ENCODE measurements at regions of chr11 and their contacts with region 1.

Region 1: DNA sequence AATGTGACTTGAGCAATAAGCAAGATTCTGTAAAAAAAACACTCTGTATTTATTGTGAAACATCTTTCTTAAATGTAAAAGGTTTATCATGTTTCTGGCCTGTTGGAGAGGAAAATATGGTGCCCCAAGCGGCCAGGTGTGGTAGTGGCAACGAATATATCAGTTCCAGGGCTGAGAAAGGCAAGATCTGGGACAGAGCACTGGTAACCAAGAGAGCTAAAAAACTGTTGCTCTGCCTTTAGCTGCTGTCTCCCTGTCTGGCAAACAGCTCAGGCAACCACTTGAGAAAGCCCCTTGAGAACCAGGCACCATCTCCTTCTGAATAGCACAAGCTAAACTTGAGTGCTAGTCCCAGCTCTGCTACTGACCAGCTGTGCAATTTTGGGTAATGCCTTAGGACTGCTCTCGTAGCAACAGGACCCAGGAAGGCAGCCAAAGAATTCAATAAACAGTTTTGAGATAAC is 129.9 kb downstream of the KCNC1 start:
- DNase-seq: peak in 1 of 2 experiments; percentile 69
- H3K4me3 ChIP-seq: no peak overlapping the region
- H3K27ac ChIP-seq: no peak overlapping the region
- H3K4me1 ChIP-seq: peaks cover 2 to 8% (median 5%) of the 10 kb centered on the region in 4 experiments; a peak in 5 of 7 replicates
- H3K27me3 ChIP-seq: no peaks in the 10 kb centered on the region
- CTCF ChIP-seq: peak; percentile 53 to 70 (median 60)
- EP300 ChIP-seq: no peak
- POLR2A ChIP-seq: no peak
- RAD21 ChIP-seq: peak; percentile 19 to 37; a peak in 3 of 4 replicates

Region 2: DNA sequence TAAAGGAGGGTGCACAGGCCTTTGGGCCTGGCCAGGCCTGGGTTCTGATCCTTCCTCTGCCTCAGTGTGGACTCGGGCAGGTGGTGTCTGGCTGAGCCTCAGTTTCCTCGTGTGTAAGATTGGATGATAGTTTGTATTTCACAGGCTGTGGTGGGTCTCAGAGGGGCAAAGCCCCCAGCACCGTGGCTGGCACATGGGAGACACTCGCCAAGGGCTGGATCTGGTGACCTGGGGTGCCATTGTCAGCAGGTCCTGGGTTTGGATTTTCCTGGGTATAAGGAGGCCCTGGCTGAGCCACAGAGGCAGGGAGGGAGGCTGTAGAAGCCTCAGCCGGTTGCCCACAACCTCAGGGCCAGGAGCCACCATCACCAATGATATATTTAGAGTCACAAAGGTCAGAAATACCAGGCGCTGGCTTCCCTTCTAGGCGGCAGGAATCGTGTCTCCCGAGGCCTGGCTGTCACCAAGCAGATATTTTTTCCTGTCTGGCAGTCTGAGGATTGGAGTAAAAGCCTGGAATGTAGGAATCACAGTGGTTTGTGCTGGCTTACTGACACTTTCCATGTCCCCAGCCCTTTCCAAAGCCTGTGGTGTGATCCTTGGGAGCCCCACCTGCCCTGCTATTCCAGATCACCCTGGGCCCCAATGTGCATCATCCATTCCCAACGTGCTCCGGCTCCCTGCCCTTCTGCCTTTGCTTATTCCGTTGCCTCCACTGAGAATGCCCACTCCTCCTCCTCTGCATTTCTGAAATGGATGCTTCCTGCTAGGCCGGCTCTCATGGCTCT is 114.3 kb before region 1 on chr11:
- CTCF ChIA-PET with region 1: interaction called, 14 read pairs
- POLR2A ChIA-PET with region 1: no interaction called
- DNase-seq: no peak
- H3K4me3 ChIP-seq: no peak overlapping the region
- H3K27ac ChIP-seq: no peak overlapping the region
- H3K4me1 ChIP-seq: no peaks in the 10 kb centered on the region
- H3K27me3 ChIP-seq: no peaks in the 10 kb centered on the region
- CTCF ChIP-seq: no peak
- EP300 ChIP-seq: no peak
- POLR2A ChIP-seq: no peak
- RAD21 ChIP-seq: no peak

Region 3: DNA sequence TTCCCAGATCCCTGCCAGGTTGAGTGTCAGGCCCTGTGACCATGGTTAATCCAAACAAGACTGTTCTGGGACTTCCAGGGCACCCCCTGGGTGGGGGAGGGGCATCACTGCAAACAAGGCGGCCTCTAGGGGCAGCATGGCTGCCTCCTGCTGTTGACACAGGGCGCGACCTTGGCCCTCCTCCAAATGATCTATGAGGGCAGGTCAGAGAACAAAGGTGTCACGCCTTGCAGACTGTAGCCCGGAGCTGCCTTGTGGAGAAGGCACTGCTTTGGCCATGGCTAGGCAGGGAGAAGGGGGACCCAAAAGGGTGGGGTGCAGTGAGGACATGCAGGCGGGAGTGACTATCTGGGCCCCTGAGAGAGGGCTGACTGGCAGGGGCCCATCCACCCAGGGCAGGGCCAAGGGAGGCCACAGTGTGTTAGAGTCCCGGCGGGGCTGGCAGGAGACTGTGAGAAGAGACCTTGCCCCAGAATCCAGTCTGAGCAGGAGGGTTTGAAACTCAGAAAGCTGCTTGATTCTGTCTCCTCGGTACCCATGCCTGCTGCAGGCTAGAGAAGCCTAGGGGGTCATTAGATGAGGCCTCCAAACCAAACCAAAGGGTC is 94.4 kb before region 1 on chr11:
- CTCF ChIA-PET with region 1: interaction called, 11 read pairs
- POLR2A ChIA-PET with region 1: no interaction called
- DNase-seq: no peak
- H3K4me3 ChIP-seq: no peak overlapping the region
- H3K27ac ChIP-seq: no peak overlapping the region
- H3K4me1 ChIP-seq: peaks cover 0 to 4% (median 0%) of the 10 kb centered on the region in 4 experiments; a peak in 2 of 7 replicates
- H3K27me3 ChIP-seq: no peaks in the 10 kb centered on the region
- CTCF ChIP-seq: peak; percentile 34 to 44 (median 43)
- EP300 ChIP-seq: no peak
- POLR2A ChIP-seq: no peak
- RAD21 ChIP-seq: peak; percentile 10 to 25; a peak in 1 of 4 replicates

Region 4: DNA sequence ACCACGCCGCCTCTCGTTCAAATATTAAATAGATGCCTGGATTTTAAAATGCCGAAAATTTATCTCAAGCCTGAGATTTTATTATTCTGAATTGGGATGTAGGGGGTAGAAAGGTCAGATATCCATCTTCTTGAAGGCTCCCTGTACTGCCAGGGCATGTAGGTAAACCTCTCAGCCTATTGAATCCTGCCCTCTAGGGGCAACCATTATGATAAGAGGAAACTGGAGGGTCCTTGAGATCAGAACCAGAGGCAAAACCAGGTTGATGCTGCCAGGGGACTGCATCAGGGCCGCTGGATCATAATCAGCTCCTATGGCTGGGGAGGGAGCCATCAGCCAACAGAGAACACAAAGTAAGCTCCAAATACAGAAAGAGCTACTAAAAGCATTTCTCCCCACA is 37.5 kb before region 1 on chr11:
- CTCF ChIA-PET with region 1: interaction called, 54 read pairs
- POLR2A ChIA-PET with region 1: no interaction called
- DNase-seq: no peak
- H3K4me3 ChIP-seq: no peak overlapping the region
- H3K27ac ChIP-seq: no peak overlapping the region
- H3K4me1 ChIP-seq: 0 out of 7 replicates have a peak, but pooled peaks cover 0 to 2% (median 0%) of the 10 kb centered on the region in 4 experiments
- H3K27me3 ChIP-seq: no peaks in the 10 kb centered on the region
- CTCF ChIP-seq: peak in 2 of 3 experiments; percentile 64 to 72; a peak in 3 of 4 replicates
- EP300 ChIP-seq: no peak
- POLR2A ChIP-seq: no peak
- RAD21 ChIP-seq: peak; percentile 72 to 84

Region 5: GRCh38 chr11:17846852-17847453 is 17.6 kb before region 1 on chr11:
- CTCF ChIA-PET with region 1: interaction called, 90 read pairs
- POLR2A ChIA-PET with region 1: no interaction called
- DNase-seq: no peak
- H3K4me3 ChIP-seq: no peak overlapping the region
- H3K27ac ChIP-seq: no peak overlapping the region
- H3K4me1 ChIP-seq: peaks cover 0 to 4% (median under 1%) of the 10 kb centered on the region in 4 experiments; a peak in 3 of 7 replicates
- H3K27me3 ChIP-seq: no peaks in the 10 kb centered on the region
- CTCF ChIP-seq: peak in 1 of 3 experiments; percentile 14; a peak in 1 of 4 replicates
- EP300 ChIP-seq: no peak
- POLR2A ChIP-seq: no peak
- RAD21 ChIP-seq: peak; percentile 17 to 44; a peak in 1 of 4 replicates

Region 6: DNA sequence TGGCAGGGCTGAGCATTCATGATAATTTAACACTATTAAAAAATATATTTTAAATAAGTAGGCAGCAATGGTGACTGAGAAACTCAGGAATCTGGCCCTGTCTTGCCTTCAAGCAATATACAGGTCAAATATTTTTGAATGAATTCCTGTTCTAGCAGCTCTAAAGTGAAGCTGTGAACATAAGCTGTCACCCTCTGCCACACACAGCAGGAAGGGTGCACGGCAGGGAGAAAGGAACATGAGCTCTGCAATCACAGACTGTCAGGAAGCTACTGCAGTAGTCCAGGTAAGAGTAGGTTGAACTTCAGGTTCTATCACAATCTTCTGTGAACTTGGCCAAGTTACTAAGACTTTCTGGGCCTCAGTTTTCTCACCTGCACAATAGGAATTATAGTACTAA is 33.6 kb after region 1 on chr11:
- CTCF ChIA-PET with region 1: interaction called, 28 read pairs
- POLR2A ChIA-PET with region 1: no interaction called
- DNase-seq: no peak
- H3K4me3 ChIP-seq: no peak overlapping the region
- H3K27ac ChIP-seq: no peak overlapping the region
- H3K4me1 ChIP-seq: 0 out of 7 replicates have a peak, but pooled peaks cover 0 to 2% (median 0%) of the 10 kb centered on the region in 4 experiments
- H3K27me3 ChIP-seq: no peaks in the 10 kb centered on the region
- CTCF ChIP-seq: no peak
- EP300 ChIP-seq: no peak
- POLR2A ChIP-seq: no peak
- RAD21 ChIP-seq: no peak

Region 7: GRCh38 chr11:17927681-17928347 is 63.3 kb after region 1 on chr11:
- CTCF ChIA-PET with region 1: interaction called, 16 read pairs
- POLR2A ChIA-PET with region 1: no interaction called
- DNase-seq: no peak
- H3K4me3 ChIP-seq: no peak overlapping the region
- H3K27ac ChIP-seq: no peak overlapping the region
- H3K4me1 ChIP-seq: peaks cover 0 to 8% (median 2%) of the 10 kb centered on the region in 4 experiments; a peak in 2 of 7 replicates
- H3K27me3 ChIP-seq: no peaks in the 10 kb centered on the region
- CTCF ChIP-seq: no peak
- EP300 ChIP-seq: no peak
- POLR2A ChIP-seq: no peak
- RAD21 ChIP-seq: no peak

Measured in H1 (cell line).